CD14-positive monocyte (primary cell): ENCODE measurements at regions of chr10 and their contacts with region 1.

Region 1: DNA sequence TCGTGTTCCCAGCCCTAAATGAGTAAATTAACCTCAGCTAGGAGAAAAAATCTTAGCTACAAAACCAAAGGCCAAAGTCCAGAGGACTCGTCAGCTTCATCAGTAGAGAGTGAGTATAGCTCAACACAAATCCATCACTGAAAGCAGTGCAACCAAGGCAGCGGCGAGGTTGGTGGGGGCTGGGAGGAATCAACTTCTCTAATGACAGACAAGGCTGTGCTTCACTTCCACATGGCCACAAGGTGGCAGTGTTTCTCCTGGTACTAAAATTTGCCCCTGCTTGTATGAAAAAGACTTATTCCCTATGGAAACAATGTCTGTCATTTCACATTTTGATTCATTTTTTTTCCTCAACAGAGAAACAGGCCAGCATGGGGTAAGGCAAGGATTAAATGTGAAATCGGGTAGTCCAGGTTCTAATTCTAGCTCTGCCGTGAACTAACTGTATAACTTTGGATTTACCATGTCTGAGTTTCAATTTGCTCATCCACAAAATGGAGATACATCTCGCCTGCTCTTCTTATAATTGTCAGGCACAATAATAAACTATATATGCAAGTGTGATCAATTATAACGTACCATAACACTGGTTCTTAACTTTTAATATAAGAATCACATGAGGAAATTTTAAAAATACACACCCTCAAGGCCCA is 39.3 kb downstream of the FAS start:
- DNase-seq: peak; percentile 63 to 85 (median 80)
- H3K4me3 ChIP-seq: no peak overlapping the region
- H3K4me3 Mint-ChIP-seq: no peak overlapping the region
- H3K27ac ChIP-seq: no peak overlapping the region
- H3K27ac Mint-ChIP-seq: peak overlapping the region in 4 of 7 donors; percentile 6 to 79 (median 40)
- H3K4me1 ChIP-seq: peaks cover 35 to 39% of the 10 kb centered on the region in 2 donors
- H3K4me1 Mint-ChIP-seq: peaks cover 38% of the 10 kb centered on the region
- H3K27me3 ChIP-seq: peaks cover 0 to 2% of the 10 kb centered on the region in 2 donors
- H3K27me3 Mint-ChIP-seq: peaks cover 0 to 5% (median 4%) of the 10 kb centered on the region in 3 donors
- CTCF ChIP-seq: peak; percentile 92

Region 2: GRCh38 chr10:88990384-88991160 is 39.3 kb before region 1 on chr10 and contains the start of gene FAS:
- intact Hi-C with region 1: loop called in 1 of 2 experiments (anchors 5 kb)
- DNase-seq: peak; percentile 76 to 98 (median 83)
- H3K4me3 ChIP-seq: peak within 1 kb of the TSS; percentile 76 to 86 (median 82)
- H3K4me3 Mint-ChIP-seq: peak within 1 kb of the TSS; percentile 99
- H3K27ac ChIP-seq: peak within 1 kb of the TSS; percentile 91 to 95
- H3K27ac Mint-ChIP-seq: peak within 1 kb of the TSS; percentile 94 to 99 (median 99)
- H3K4me1 ChIP-seq: peaks cover 53 to 68% of the 10 kb centered on the region in 2 donors
- H3K4me1 Mint-ChIP-seq: peaks cover 65% of the 10 kb centered on the region
- H3K27me3 ChIP-seq: no peaks in the 10 kb centered on the region
- H3K27me3 Mint-ChIP-seq: peaks cover 0 to 4% (median 0%) of the 10 kb centered on the region in 3 donors
- CTCF ChIP-seq: peak; percentile 18
- polyA plus RNA-seq, gene FAS: 27.3 to 28.9 (median 27.9) TPM

Region 3: DNA sequence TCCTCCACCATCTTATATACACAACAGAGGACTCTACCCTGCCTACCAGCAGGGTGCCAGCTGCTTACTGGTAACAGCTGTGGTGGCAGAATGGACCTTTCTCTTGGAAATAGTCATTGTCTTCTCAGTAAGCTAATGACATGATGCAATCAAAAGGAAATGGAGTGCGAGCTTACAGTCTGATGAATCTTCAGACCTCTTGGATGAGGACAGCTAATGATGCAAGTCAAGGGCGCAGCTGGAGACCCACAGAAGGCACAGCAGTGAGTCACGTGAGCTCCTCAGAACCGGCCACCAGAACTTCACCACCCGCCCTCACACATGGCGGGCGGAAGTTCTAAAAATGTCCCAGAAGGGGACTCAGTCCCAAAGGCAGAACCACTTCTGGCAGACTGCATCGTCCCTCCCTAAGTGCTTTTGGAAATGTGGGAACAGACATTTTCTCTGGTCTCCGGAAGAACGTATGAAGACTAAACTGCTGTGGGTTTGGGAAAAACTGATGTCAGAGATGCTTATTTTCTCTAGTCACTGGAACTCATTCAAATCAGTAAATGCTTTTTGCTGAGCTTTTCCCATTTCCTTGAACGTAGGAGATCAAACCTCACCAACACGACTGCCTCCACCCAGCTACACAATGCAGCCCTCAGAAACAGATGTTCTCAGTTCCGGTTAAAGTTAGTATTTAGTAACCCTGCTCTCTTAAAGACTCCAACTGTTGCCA is 57.0 kb after region 1 on chr10:
- intact Hi-C with region 1: loop called (anchors 5 to 10 kb)
- DNase-seq: peak; percentile 86 to 92 (median 91)
- H3K4me3 ChIP-seq: no peak overlapping the region
- H3K4me3 Mint-ChIP-seq: no peak overlapping the region
- H3K27ac ChIP-seq: peak overlapping the region in 1 of 2 donors; percentile 58
- H3K27ac Mint-ChIP-seq: peak overlapping the region in 2 of 7 donors; percentile 39 to 85
- H3K4me1 ChIP-seq: peaks cover 41 to 44% of the 10 kb centered on the region in 2 donors
- H3K4me1 Mint-ChIP-seq: peaks cover 20% of the 10 kb centered on the region
- H3K27me3 ChIP-seq: no peaks in the 10 kb centered on the region
- H3K27me3 Mint-ChIP-seq: no peaks in the 10 kb centered on the region
- CTCF ChIP-seq: peak; percentile 41

Region 4: DNA sequence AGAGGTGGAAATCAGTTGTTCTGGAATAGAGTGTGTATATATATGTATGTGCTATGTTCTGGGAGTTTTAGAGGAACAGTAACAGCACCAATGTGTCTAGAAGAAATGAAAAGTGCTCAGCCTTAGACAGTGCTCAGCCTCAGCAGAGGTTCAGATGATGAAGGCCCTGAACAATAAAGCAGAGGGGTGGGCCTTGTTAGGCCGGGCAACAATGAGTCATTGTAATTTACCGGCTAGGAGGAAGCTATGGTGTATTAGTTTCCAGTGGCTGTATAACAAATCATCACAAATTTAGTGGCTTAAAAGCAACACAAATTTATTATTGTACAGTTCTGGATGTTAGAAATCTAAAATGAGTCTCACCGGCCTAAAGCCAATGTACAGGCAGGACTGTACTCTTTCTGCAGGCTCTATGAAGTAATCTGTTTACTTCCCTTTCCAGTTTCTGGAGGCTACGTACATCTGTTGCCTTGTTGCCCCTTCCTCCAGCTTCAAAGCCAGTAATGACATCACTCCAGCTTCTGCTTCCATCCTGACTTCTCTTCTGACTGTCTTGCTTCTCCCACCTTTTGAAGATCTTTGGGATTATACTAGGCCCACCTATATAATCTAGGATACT is 92.6 kb after region 1 on chr10:
- intact Hi-C with region 1: loop called in 1 of 2 experiments (anchors 5 kb)
- DNase-seq: peak; percentile 76 to 87 (median 83)
- H3K4me3 ChIP-seq: peak overlapping the region in 1 of 3 experiments; percentile 34
- H3K4me3 Mint-ChIP-seq: peak overlapping the region in 1 of 2 donors; percentile 81
- H3K27ac ChIP-seq: peak overlapping the region; percentile 45 to 94
- H3K27ac Mint-ChIP-seq: peak overlapping the region; percentile 98 to 100 (median 99)
- H3K4me1 ChIP-seq: peaks cover 34 to 38% of the 10 kb centered on the region in 2 donors
- H3K4me1 Mint-ChIP-seq: peaks cover 39% of the 10 kb centered on the region
- H3K27me3 ChIP-seq: peaks cover 0 to 13% of the 10 kb centered on the region in 2 donors
- H3K27me3 Mint-ChIP-seq: peaks cover 0 to 9% (median 2%) of the 10 kb centered on the region in 3 donors
- CTCF ChIP-seq: no peak

Region 5: DNA sequence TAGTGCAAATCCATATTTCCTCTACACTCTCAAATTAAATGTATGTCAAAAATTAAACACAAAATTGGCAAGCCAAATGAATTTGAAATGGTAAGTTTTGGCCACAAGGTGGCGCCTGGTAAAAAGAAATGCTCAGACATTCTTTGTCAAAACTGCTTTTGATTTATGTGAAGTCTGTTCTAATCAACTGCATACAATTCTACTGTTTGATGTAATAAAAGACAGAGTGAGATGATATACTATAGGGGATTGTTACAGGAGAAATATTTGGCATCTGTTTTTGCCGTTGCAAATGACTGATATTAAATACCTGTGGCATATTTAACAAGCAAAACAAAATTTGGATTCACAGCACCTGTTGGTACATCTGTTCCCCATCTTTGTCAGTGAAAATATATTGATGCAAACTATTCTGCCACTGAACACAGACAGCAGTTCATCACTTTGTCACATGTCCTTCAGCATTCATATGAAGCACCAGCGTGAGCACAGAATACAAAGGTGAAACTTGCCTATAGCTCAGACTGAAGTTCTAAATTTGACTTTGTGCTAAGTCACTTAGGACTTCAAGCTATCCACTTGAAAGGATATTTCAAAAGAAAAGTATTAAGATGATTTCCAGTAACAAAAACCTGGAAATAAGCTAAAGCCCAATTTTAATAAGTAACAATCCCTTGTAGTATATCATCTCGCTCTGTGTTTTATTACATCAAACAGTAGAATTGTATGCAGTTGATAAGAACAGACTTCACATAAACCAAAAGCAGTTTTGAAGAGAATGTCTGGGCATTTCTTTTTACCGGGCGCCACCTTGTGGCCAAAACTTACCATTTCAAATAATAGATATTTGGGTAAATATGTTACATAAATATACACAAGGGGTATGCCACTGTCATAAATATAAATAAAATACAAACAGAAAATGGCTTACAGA is 187.4 kb after region 1 on chr10:
- intact Hi-C with region 1: loop called (anchors 2 kb)
- DNase-seq: peak; percentile 45 to 67 (median 53)
- H3K4me3 ChIP-seq: no peak overlapping the region
- H3K4me3 Mint-ChIP-seq: no peak overlapping the region
- H3K27ac ChIP-seq: peak overlapping the region in 1 of 2 donors; percentile 31
- H3K27ac Mint-ChIP-seq: peak overlapping the region in 3 of 7 donors; percentile 20 to 68 (median 61)
- H3K4me1 ChIP-seq: peaks cover 5 to 10% of the 10 kb centered on the region in 2 donors
- H3K4me1 Mint-ChIP-seq: peaks cover 9% of the 10 kb centered on the region
- H3K27me3 ChIP-seq: no peaks in the 10 kb centered on the region
- H3K27me3 Mint-ChIP-seq: peaks cover 0 to 2% (median 0%) of the 10 kb centered on the region in 3 donors
- CTCF ChIP-seq: peak; percentile 78